ENCODE measurements at regions of chr14 and their contacts with region 1.

Region 1: GRCh38 chr14:27958757-27959387 is 807.7 kb upstream of the FOXG1 start:
- DNase-seq: no peak
- ATAC-seq: no peak
- H3K4me3 ChIP-seq: no peak overlapping the region
- H3K4me3 Mint-ChIP-seq: no peak overlapping the region
- H3K27ac ChIP-seq: no peak overlapping the region
- H3K27ac Mint-ChIP-seq: no peak overlapping the region
- H3K4me1 ChIP-seq: no peaks in the 10 kb centered on the region
- H3K4me1 Mint-ChIP-seq: no peaks in the 10 kb centered on the region
- H3K27me3 ChIP-seq: no peaks in the 10 kb centered on the region
- H3K27me3 Mint-ChIP-seq: no peaks in the 10 kb centered on the region
- CTCF ChIP-seq: no peak

Region 2: DNA sequence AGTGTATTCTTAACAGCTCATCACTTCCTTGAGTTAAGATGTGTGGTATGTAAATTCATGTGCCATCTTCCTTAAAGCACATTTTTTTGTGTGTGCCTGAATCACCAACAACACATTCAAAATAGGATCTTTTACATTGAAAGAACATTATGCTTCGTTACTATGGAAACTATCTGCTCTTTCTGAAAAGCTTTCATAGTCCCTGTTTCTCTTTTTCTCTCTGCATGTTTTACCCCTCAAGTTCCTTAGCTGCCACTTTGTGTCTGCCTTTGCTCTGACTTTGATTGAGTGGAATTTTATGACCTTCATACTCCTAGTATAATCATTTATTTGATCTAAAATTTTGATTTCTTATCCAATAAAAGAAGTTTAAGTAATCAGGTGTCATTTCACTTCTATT is 72.6 kb before region 1 on chr14:
- CTCF ChIA-PET with region 1: no interaction called
- POLR2A ChIA-PET with region 1: no interaction called
- intact Hi-C with region 1: no loop called
- DNase-seq: no peak
- ATAC-seq: no peak
- H3K4me3 ChIP-seq: no peak overlapping the region
- H3K4me3 Mint-ChIP-seq: no peak overlapping the region
- H3K27ac ChIP-seq: no peak overlapping the region
- H3K27ac Mint-ChIP-seq: no peak overlapping the region
- H3K4me1 ChIP-seq: no peaks in the 10 kb centered on the region
- H3K4me1 Mint-ChIP-seq: no peaks in the 10 kb centered on the region
- H3K27me3 ChIP-seq: no peaks in the 10 kb centered on the region
- H3K27me3 Mint-ChIP-seq: no peaks in the 10 kb centered on the region
- CTCF ChIP-seq: no peak

Region 3: GRCh38 chr14:27911603-27912002 is 47.3 kb before region 1 on chr14:
- CTCF ChIA-PET with region 1: no interaction called
- POLR2A ChIA-PET with region 1: no interaction called
- intact Hi-C with region 1: loop called in 1 of 2 experiments (anchors 5 kb)
- DNase-seq: no peak
- ATAC-seq: no peak
- H3K4me3 ChIP-seq: no peak overlapping the region
- H3K4me3 Mint-ChIP-seq: no peak overlapping the region
- H3K27ac ChIP-seq: no peak overlapping the region
- H3K27ac Mint-ChIP-seq: no peak overlapping the region
- H3K4me1 ChIP-seq: no peaks in the 10 kb centered on the region
- H3K4me1 Mint-ChIP-seq: no peaks in the 10 kb centered on the region
- H3K27me3 ChIP-seq: no peaks in the 10 kb centered on the region
- H3K27me3 Mint-ChIP-seq: no peaks in the 10 kb centered on the region
- CTCF ChIP-seq: no peak